ENCODE measurements at regions of chr1 and their contacts with region 1.

Region 1: DNA sequence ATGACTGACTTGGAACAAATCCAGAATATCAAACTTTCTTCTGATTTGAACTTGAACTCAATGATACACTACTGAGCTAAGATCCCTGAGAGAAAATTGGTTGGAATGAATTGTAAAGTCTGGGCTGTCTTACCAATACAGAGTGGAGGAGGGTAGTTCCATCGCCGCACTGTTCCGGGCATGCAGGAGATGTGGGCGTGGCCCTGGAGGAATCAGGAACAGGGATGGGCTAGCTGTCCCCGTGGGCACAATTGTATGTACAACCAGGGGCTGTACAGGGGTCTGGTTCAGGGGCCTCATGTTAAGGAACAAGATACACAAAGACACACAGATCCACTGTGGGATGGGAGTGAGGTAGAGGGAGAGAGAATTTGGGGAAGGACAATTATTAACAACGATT is 144.3 kb downstream of the ZSCAN20 start:
- DNase-seq: no peak

Region 2: GRCh38 chr1:33094971-33095604 is 521.7 kb before region 1 on chr1:
- intact Hi-C with region 1: loop called (anchors 10 kb)
- DNase-seq: no peak

Region 3: GRCh38 chr1:33349778-33350610 is 266.8 kb before region 1 on chr1:
- intact Hi-C with region 1: no loop called
- DNase-seq: peak; percentile 94

Region 4: GRCh38 chr1:33563699-33564098 is 53.1 kb before region 1 on chr1:
- intact Hi-C with region 1: no loop called
- DNase-seq: no peak